Activated CD4-positive, alpha-beta memory T cell treated with anti-CD3 and anti-CD28 coated beads for 36 hours (primary cell): ENCODE measurements at regions of chr4 and their contacts with region 1.

Region 1: DNA sequence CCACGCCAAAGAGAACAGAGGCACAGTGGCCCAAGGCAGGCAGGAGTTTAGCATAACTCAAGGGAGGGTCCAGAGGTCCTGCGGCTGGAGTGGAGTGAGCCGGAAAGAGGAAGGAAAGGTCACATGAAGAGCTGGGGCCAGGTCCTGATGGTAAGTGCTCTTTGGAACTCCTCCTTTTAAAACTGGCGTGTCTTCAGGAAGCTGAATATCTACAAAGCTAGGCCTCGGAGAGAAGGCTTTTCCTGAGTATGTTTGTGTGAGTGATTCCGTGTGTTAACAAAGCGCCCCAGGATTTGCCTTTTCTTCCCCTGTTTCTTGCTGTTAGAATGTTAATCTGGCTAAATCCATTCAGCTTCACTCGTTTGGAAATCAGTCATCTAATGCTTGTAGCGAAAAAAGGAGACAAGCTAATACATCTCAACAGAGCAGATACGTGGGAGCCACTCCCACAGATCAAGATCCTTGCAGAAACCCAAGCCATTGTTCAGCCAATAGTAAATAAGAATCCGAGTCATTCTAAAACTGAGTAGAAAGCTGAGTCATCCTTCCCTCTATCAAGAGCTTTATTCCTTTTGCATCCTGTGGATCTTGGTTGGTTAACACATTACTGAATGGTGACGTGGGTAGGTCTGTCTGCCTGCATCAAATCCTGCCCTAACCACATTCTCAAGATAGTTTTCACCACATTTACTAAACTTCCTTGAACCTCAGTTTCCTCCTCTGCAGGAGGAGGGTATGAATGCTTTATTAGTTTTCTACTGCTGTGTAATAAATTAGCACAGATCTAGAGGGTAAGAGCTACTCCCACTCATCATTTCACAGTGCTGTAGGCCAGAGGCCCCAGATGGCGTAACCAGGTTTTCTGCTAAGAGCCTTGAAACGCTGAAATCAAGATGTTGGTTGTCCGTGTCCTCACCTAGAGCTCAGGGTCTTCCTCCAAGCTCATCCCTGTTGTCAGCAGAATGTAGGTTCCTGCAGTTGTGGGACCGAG is 43.2 kb upstream of the RBM47 start:
- DNase-seq: peak; percentile 71
- H3K4me3 Mint-ChIP-seq: peak overlapping the region; percentile 63
- H3K27ac Mint-ChIP-seq: peak overlapping the region; percentile 92
- H3K4me1 Mint-ChIP-seq: peaks cover 50% of the 10 kb centered on the region
- H3K27me3 Mint-ChIP-seq: no peaks in the 10 kb centered on the region

Region 2: GRCh38 chr4:40656201-40656901 is 16.5 kb before region 1 on chr4:
- CTCF ChIA-PET with region 1: no interaction called
- POLR2A ChIA-PET with region 1: interaction called, 4 read pairs
- intact Hi-C with region 1: loop called (anchors 2 kb)
- DNase-seq: peak; percentile 22
- H3K4me3 Mint-ChIP-seq: no peak overlapping the region
- H3K27ac Mint-ChIP-seq: no peak overlapping the region
- H3K4me1 Mint-ChIP-seq: peaks cover 10% of the 10 kb centered on the region
- H3K27me3 Mint-ChIP-seq: no peaks in the 10 kb centered on the region

Region 3: DNA sequence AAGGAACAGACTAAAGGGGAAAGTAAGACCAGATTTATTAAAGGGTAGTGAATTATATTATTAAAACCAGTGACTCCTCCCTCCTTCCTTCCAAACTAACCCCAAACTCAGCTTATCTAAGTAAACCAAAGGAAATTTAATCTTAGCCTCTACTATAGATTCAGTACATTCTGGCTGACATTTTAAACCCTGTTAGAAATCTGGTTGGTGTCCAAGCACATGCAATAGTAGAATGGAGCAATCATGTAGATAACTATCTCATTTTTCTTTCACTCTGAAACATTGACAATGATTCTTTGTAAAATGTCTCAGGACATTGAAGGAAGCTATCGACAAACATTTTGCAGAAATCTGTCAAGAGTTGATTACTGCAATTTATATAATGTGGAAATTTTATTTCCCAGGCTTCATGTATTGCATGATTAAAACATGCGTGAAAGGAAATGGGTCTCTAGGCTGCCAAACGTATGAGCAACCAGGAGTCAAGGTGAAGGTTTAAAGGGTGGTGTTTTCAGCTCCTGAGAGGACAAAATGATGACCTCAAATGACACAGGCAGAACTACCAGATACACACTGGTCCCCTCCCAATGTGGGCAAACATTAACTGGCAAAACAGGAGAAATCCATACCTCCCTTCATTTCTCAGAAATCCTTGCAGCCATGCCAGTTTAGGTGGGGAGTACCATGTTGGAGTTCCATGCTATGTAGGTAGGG is 15.0 kb after region 1 on chr4:
- CTCF ChIA-PET with region 1: interaction called, 7 read pairs
- POLR2A ChIA-PET with region 1: interaction called, 20 read pairs
- intact Hi-C with region 1: loop called (anchors 1 kb)
- DNase-seq: no peak
- H3K4me3 Mint-ChIP-seq: no peak overlapping the region
- H3K27ac Mint-ChIP-seq: peak overlapping the region; percentile 76
- H3K4me1 Mint-ChIP-seq: peaks cover 14% of the 10 kb centered on the region
- H3K27me3 Mint-ChIP-seq: peaks cover 11% of the 10 kb centered on the region

Region 4: GRCh38 chr4:40763228-40763716 is 90.4 kb after region 1 on chr4:
- CTCF ChIA-PET with region 1: no interaction called
- POLR2A ChIA-PET with region 1: no interaction called
- intact Hi-C with region 1: loop called (anchors 1 kb)
- DNase-seq: peak; percentile 76
- H3K4me3 Mint-ChIP-seq: no peak overlapping the region
- H3K27ac Mint-ChIP-seq: peak overlapping the region; percentile 16
- H3K4me1 Mint-ChIP-seq: peaks cover 11% of the 10 kb centered on the region
- H3K27me3 Mint-ChIP-seq: peaks cover 4% of the 10 kb centered on the region